Endothelial cell of umbilical vein (primary cell): ENCODE measurements at regions of chr9 and their contacts with region 1.

Region 1: GRCh38 chr9:109903515-109904138 is 123.6 kb downstream of the PALM2AKAP2 start:
- DNase-seq: peak; percentile 82
- H3K4me3 ChIP-seq: no peak overlapping the region
- H3K27ac ChIP-seq: no peak overlapping the region
- H3K4me1 ChIP-seq: peaks cover 24% of the 10 kb centered on the region
- H3K27me3 ChIP-seq: peaks cover 8 to 9% of the 10 kb centered on the region in 2 experiments
- CTCF ChIP-seq: peak; percentile 62 to 82
- POLR2A ChIP-seq: no peak

Region 2: GRCh38 chr9:109717342-109717741 is 186.3 kb before region 1 on chr9:
- CTCF ChIA-PET with region 1: no interaction called
- POLR2A ChIA-PET with region 1: no interaction called
- dilution Hi-C with region 1: no loop called
- intact Hi-C with region 1: no loop called
- DNase-seq: no peak
- H3K4me3 ChIP-seq: no peak overlapping the region
- H3K27ac ChIP-seq: no peak overlapping the region
- H3K4me1 ChIP-seq: no peaks in the 10 kb centered on the region
- H3K27me3 ChIP-seq: no peaks in the 10 kb centered on the region
- CTCF ChIP-seq: no peak
- POLR2A ChIP-seq: no peak

Region 3: DNA sequence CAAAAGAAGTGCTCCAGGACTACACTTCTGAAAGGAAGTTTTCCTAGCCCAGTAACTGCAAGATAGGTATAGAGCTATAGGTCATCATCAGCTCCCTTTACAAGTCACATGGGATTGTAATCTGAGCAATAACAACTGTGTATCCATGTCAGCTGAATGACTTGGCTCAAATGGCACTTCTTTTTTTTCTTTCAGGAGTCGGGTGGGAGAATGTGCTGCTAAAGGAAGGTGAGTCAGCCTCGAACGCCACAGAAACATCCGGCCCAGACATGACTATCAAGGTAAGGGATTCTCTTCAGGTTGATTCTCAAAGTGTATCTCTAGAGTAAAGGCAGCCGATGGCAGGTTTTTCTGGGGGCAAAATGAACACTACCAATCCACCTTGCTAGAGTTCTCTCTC is 112.1 kb after region 1 on chr9:
- CTCF ChIA-PET with region 1: interaction called, 16 read pairs
- POLR2A ChIA-PET with region 1: no interaction called
- dilution Hi-C with region 1: no loop called
- intact Hi-C with region 1: loop called (anchors 1 kb)
- DNase-seq: peak; percentile 95
- H3K4me3 ChIP-seq: no peak overlapping the region
- H3K27ac ChIP-seq: peak overlapping the region; percentile 100
- H3K4me1 ChIP-seq: peaks cover 28% of the 10 kb centered on the region
- H3K27me3 ChIP-seq: no peaks in the 10 kb centered on the region
- CTCF ChIP-seq: no peak
- POLR2A ChIP-seq: no peak

Region 4: GRCh38 chr9:110058304-110058953 is 154.8 kb after region 1 on chr9:
- CTCF ChIA-PET with region 1: interaction called, 64 read pairs
- POLR2A ChIA-PET with region 1: interaction called, 5 read pairs
- dilution Hi-C with region 1: loop called (anchors 10 kb)
- intact Hi-C with region 1: loop called (anchors 1 kb)
- DNase-seq: peak; percentile 82
- H3K4me3 ChIP-seq: no peak overlapping the region
- H3K27ac ChIP-seq: peak overlapping the region; percentile 30
- H3K4me1 ChIP-seq: peaks cover 30% of the 10 kb centered on the region
- H3K27me3 ChIP-seq: no peaks in the 10 kb centered on the region
- CTCF ChIP-seq: peak; percentile 37 to 46
- POLR2A ChIP-seq: peak; percentile 31

Region 5: DNA sequence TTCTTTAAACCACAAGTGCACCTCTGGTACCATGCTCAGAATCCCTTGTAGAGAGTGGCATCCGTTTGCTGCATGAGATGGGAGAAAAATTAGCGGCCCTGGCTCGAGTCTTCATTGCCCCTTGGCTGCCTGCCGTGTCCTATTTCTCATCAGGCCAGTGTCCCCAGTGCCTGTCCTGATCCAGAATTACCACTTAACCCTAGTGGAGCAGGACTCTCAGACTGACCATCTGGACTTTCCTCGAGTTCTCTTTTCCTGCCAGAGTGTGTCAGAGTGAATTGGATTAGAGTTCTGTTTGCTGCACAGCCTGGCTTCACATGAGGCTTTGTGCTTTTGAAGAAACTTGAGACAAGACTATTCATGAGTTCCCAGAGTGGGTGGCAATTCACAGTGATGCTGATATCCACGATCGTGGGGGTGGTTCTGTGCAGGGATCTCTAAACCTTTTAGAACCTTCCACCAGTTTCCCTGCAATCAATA is 211.8 kb after region 1 on chr9:
- CTCF ChIA-PET with region 1: interaction called, 8 read pairs
- POLR2A ChIA-PET with region 1: no interaction called
- dilution Hi-C with region 1: no loop called
- intact Hi-C with region 1: loop called (anchors 2 kb)
- DNase-seq: peak; percentile 59
- H3K4me3 ChIP-seq: no peak overlapping the region
- H3K27ac ChIP-seq: peak overlapping the region; percentile 36
- H3K4me1 ChIP-seq: peaks cover 28% of the 10 kb centered on the region
- H3K27me3 ChIP-seq: no peaks in the 10 kb centered on the region
- CTCF ChIP-seq: no peak
- POLR2A ChIP-seq: no peak

Region 6: GRCh38 chr9:110143950-110144545 is 240.4 kb after region 1 on chr9:
- CTCF ChIA-PET with region 1: interaction called, 117 read pairs
- POLR2A ChIA-PET with region 1: no interaction called
- dilution Hi-C with region 1: no loop called
- intact Hi-C with region 1: no loop called
- DNase-seq: no peak
- H3K4me3 ChIP-seq: no peak overlapping the region
- H3K27ac ChIP-seq: peak overlapping the region; percentile 1
- H3K4me1 ChIP-seq: peaks cover 42% of the 10 kb centered on the region
- H3K27me3 ChIP-seq: no peaks in the 10 kb centered on the region
- CTCF ChIP-seq: no peak
- POLR2A ChIP-seq: no peak

Region 7: DNA sequence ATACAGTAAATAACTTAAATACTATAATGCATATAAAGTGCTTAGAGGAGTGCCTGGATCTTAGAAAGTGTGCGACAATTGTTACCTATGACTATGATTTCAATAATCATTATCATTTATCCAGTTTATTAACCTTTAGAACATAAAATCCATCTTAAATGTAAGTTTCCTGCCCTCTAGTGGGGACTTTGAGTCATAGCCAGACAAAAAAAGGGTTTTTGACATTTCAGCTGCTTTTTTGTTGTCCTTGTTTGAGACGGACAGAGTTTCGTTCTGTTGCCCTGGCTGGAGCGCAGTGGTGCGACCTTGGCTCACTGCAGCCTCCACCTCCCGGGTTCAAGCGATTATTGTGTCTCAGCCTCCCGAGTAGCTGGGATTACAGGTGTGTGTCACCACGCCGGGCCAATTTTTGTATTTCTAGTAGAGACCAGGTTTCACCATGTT is 314.1 kb after region 1 on chr9:
- CTCF ChIA-PET with region 1: interaction called, 8 read pairs
- POLR2A ChIA-PET with region 1: no interaction called
- dilution Hi-C with region 1: no loop called
- intact Hi-C with region 1: loop called (anchors 1 kb)
- DNase-seq: peak; percentile 65
- H3K4me3 ChIP-seq: no peak overlapping the region
- H3K27ac ChIP-seq: no peak overlapping the region
- H3K4me1 ChIP-seq: no peaks in the 10 kb centered on the region
- H3K27me3 ChIP-seq: peaks cover 4 to 11% of the 10 kb centered on the region in 2 experiments
- CTCF ChIP-seq: peak; percentile 47 to 62
- POLR2A ChIP-seq: no peak